ENCODE measurements at regions of chr9 and their contacts with region 1.

Region 1: GRCh38 chr9:128034821-128035764 is 32.0 kb downstream of the NAIF1 start:
- DNase-seq: peak; percentile 36 to 80 (median 75)
- H3K4me3 ChIP-seq: no peak overlapping the region
- H3K4me3 Mint-ChIP-seq: peak overlapping the region; percentile 35 to 66 (median 52)
- H3K27ac ChIP-seq: no peak overlapping the region
- H3K27ac Mint-ChIP-seq: peak overlapping the region; percentile 81 to 94 (median 87)
- H3K4me1 ChIP-seq: peaks cover 45% of the 10 kb centered on the region
- H3K4me1 Mint-ChIP-seq: peaks cover 31 to 43% (median 36%) of the 10 kb centered on the region in 3 donors
- H3K27me3 ChIP-seq: no peaks in the 10 kb centered on the region
- H3K27me3 Mint-ChIP-seq: no peaks in the 10 kb centered on the region

Region 2: DNA sequence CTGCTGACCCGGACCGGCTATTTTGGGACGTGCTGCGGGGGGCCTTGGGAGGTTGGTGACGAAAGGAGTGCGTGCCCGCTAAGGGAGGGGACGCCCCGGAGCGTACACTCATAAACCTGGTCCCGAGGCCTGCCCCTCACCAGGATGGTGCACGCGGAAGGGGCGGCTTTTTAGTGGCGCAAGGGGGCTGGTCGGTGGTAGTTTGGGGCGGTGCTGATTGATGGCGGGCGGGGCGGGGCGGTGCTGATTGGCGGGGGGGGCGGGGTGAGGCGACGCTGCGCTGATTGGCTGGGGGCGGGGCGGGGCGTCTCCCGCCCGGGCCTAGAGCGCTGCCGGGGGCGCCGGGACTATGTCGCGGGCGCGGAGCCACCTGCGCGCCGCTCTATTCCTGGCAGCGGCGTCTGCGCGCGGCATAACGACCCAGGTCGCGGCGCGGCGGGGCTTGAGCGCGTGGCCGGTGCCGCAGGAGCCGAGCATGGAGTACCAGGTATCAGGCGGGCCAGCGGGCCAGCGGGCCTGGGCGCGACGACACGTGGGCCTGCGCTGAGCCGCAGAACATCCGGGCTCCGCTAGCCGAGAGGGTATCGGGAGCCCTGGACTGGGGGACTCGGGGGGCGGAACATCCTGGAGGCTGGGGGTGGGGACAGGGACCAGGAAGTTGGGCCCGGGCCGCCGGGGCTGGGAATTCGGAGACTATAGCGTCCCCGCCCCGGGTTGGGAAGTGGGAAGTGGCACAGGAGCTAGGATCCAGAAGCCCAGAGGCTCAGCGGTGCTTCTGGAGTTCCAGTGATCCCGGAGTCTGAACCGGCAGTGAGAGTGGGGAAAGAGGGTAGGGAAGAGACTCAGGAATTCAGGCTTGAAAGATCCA is 232.3 kb before region 1 on chr9 and contains the start of gene FPGS:
- CTCF ChIA-PET with region 1: no interaction called
- POLR2A ChIA-PET with region 1: no interaction called
- DNase-seq: peak; percentile 79 to 91 (median 85)
- H3K4me3 ChIP-seq: peak within 1 kb of the TSS; percentile 97
- H3K4me3 Mint-ChIP-seq: peak within 1 kb of the TSS; percentile 91 to 98 (median 93)
- H3K27ac ChIP-seq: peak within 1 kb of the TSS; percentile 90
- H3K27ac Mint-ChIP-seq: peak within 1 kb of the TSS; percentile 81 to 100 (median 94)
- H3K4me1 ChIP-seq: peaks cover 20% of the 10 kb centered on the region
- H3K4me1 Mint-ChIP-seq: peaks cover 20 to 46% (median 28%) of the 10 kb centered on the region in 3 donors
- H3K27me3 ChIP-seq: no peaks in the 10 kb centered on the region
- H3K27me3 Mint-ChIP-seq: peaks cover 0 to 1% of the 10 kb centered on the region in 2 donors
- total RNA-seq, gene FPGS: 110 to 111 TPM

Region 3: GRCh38 chr9:127930231-127931091 is 104.6 kb before region 1 on chr9 and contains the start of gene PIP5KL1:
- CTCF ChIA-PET with region 1: interaction called, 18 read pairs
- POLR2A ChIA-PET with region 1: interaction called, 3 read pairs
- DNase-seq: peak; percentile 65 to 80 (median 71)
- H3K4me3 ChIP-seq: peak within 1 kb of the TSS; percentile 69
- H3K4me3 Mint-ChIP-seq: peak within 1 kb of the TSS; percentile 69 to 91 (median 77)
- H3K27ac ChIP-seq: peak within 1 kb of the TSS; percentile 41
- H3K27ac Mint-ChIP-seq: peak within 1 kb of the TSS; percentile 29 to 80 (median 60)
- H3K4me1 ChIP-seq: peaks cover 43% of the 10 kb centered on the region
- H3K4me1 Mint-ChIP-seq: peaks cover 18 to 64% (median 28%) of the 10 kb centered on the region in 3 donors
- H3K27me3 ChIP-seq: no peaks in the 10 kb centered on the region
- H3K27me3 Mint-ChIP-seq: peaks cover 0 to 4% of the 10 kb centered on the region in 2 donors
- total RNA-seq, gene PIP5KL1: 1.4 to 2.5 TPM

Region 4: GRCh38 chr9:127955294-127956035 is 79.6 kb before region 1 on chr9:
- CTCF ChIA-PET with region 1: interaction called, 485 read pairs
- POLR2A ChIA-PET with region 1: interaction called, 13 read pairs
- DNase-seq: peak; percentile 63 to 87 (median 64)
- H3K4me3 ChIP-seq: peak overlapping the region; percentile 42
- H3K4me3 Mint-ChIP-seq: peak overlapping the region; percentile 1 to 71 (median 57)
- H3K27ac ChIP-seq: no peak overlapping the region
- H3K27ac Mint-ChIP-seq: peak overlapping the region; percentile 28 to 89 (median 76)
- H3K4me1 ChIP-seq: peaks cover 97% of the 10 kb centered on the region
- H3K4me1 Mint-ChIP-seq: peaks cover 72 to 92% (median 82%) of the 10 kb centered on the region in 3 donors
- H3K27me3 ChIP-seq: no peaks in the 10 kb centered on the region
- H3K27me3 Mint-ChIP-seq: no peaks in the 10 kb centered on the region

Region 5: GRCh38 chr9:127980706-127981558 is 54.2 kb before region 1 on chr9 and contains the start of gene EEIG1:
- CTCF ChIA-PET with region 1: interaction called, 186 read pairs
- POLR2A ChIA-PET with region 1: interaction called, 10 read pairs
- DNase-seq: peak; percentile 96 to 99 (median 97)
- H3K4me3 ChIP-seq: peak within 1 kb of the TSS; percentile 98
- H3K4me3 Mint-ChIP-seq: peak within 1 kb of the TSS; percentile 95 to 99 (median 97)
- H3K27ac ChIP-seq: peak within 1 kb of the TSS; percentile 68
- H3K27ac Mint-ChIP-seq: peak within 1 kb of the TSS; percentile 90 to 99 (median 94)
- H3K4me1 ChIP-seq: peaks cover 48% of the 10 kb centered on the region
- H3K4me1 Mint-ChIP-seq: peaks cover 37 to 53% (median 41%) of the 10 kb centered on the region in 3 donors
- H3K27me3 ChIP-seq: no peaks in the 10 kb centered on the region
- H3K27me3 Mint-ChIP-seq: no peaks in the 10 kb centered on the region
- total RNA-seq, gene EEIG1: 82.2 to 93.3 TPM

Region 6: GRCh38 chr9:128007566-128008138 is 27.4 kb before region 1 on chr9:
- CTCF ChIA-PET with region 1: interaction called, 27 read pairs
- POLR2A ChIA-PET with region 1: interaction called, 5 read pairs
- DNase-seq: peak; percentile 75 to 96 (median 90)
- H3K4me3 ChIP-seq: peak overlapping the region; percentile 67
- H3K4me3 Mint-ChIP-seq: peak overlapping the region; percentile 65 to 92 (median 77)
- H3K27ac ChIP-seq: peak overlapping the region; percentile 53
- H3K27ac Mint-ChIP-seq: peak overlapping the region; percentile 91 to 99 (median 97)
- H3K4me1 ChIP-seq: peaks cover 76% of the 10 kb centered on the region
- H3K4me1 Mint-ChIP-seq: peaks cover 40 to 81% (median 54%) of the 10 kb centered on the region in 3 donors
- H3K27me3 ChIP-seq: no peaks in the 10 kb centered on the region
- H3K27me3 Mint-ChIP-seq: no peaks in the 10 kb centered on the region

Region 7: DNA sequence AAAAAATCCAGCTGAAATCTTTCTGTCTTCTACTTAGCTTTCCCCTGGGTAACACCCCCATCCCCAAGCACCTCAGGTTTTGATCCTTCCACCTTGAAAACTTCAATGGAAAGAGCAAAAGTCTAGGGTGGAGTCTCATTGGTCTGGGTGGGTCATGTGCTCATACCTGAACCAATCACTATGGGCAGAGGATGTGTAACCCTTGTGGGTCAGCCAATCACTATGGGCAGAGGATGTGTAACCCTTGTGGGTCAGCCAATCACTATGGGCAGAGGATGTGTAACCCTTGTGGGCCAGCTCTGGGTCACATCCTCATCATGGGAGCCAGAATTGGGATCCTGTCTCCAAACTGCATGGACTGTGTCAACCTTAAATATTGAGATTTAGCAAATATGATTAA is 13.6 kb after region 1 on chr9:
- CTCF ChIA-PET with region 1: interaction called, 12 read pairs
- POLR2A ChIA-PET with region 1: interaction called, 6 read pairs
- DNase-seq: no peak
- H3K4me3 ChIP-seq: no peak overlapping the region
- H3K4me3 Mint-ChIP-seq: no peak overlapping the region
- H3K27ac ChIP-seq: no peak overlapping the region
- H3K27ac Mint-ChIP-seq: peak overlapping the region in 1 of 8 donors; percentile 81
- H3K4me1 ChIP-seq: no peaks in the 10 kb centered on the region
- H3K4me1 Mint-ChIP-seq: no peaks in the 10 kb centered on the region
- H3K27me3 ChIP-seq: no peaks in the 10 kb centered on the region
- H3K27me3 Mint-ChIP-seq: no peaks in the 10 kb centered on the region

Region 8: DNA sequence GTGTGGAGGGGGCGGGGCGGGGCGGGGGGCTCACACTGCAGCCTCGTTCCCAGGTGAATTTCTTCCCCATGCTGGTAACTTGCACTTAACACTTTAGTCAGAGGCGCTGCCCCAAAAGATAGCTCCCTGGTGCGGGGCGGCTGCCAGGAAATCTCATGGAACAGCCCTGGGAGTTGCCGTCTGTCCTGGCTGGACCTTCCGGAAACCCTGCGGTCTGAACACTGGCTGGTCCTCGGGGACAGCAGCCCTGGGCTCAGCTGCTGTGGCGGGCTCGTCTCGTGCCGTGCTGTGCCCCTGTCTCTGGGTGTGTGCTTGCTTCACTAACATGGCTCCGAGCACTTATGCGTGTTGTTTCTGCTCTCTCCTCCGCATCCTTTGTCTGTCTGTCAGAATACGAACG is 66.6 kb after region 1 on chr9:
- CTCF ChIA-PET with region 1: no interaction called
- POLR2A ChIA-PET with region 1: no interaction called
- DNase-seq: no peak
- H3K4me3 ChIP-seq: no peak overlapping the region
- H3K4me3 Mint-ChIP-seq: no peak overlapping the region
- H3K27ac ChIP-seq: no peak overlapping the region
- H3K27ac Mint-ChIP-seq: peak overlapping the region in 1 of 8 donors; percentile 38
- H3K4me1 ChIP-seq: peaks cover 63% of the 10 kb centered on the region
- H3K4me1 Mint-ChIP-seq: peaks cover 36 to 67% (median 41%) of the 10 kb centered on the region in 3 donors
- H3K27me3 ChIP-seq: no peaks in the 10 kb centered on the region
- H3K27me3 Mint-ChIP-seq: no peaks in the 10 kb centered on the region

Measured in CD8-positive, alpha-beta memory T cell (primary cell).